GM18951 (cell line): ENCODE measurements at regions of chr7 and their contacts with region 1.

Region 1: GRCh38 chr7:26090927-26091519 is 61.0 kb upstream of the NFE2L3 start:
- POLR2A ChIP-seq: no peak

Region 2: DNA sequence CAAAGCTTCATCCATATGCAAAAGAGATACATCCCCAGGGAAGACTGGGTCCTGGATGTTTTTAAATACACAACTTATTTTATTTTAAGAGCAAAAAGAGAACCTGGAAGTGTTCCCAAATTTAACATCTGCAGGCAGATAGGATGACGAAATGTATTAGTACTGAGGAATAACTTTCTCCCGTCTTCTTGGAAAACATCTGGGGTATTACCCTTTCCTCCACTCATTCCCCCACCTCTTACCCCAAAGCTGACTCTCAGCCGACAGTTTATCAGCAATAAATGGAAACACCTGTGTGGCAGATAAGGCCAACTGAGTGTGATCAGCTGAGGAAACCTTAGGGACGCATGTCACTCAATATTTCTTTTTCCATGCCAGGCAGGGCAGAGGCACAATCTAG is 427.1 kb before region 1 on chr7:
- in situ Hi-C with region 1: no loop called
- POLR2A ChIP-seq: no peak

Region 3: GRCh38 chr7:26193432-26194207 is 102.6 kb after region 1 on chr7:
- in situ Hi-C with region 1: loop called (anchors 5 kb)
- POLR2A ChIP-seq: no peak